Spleen (tissue), 13 donors: ENCODE measurements at regions of chr4 and their contacts with region 1.

Region 1: DNA sequence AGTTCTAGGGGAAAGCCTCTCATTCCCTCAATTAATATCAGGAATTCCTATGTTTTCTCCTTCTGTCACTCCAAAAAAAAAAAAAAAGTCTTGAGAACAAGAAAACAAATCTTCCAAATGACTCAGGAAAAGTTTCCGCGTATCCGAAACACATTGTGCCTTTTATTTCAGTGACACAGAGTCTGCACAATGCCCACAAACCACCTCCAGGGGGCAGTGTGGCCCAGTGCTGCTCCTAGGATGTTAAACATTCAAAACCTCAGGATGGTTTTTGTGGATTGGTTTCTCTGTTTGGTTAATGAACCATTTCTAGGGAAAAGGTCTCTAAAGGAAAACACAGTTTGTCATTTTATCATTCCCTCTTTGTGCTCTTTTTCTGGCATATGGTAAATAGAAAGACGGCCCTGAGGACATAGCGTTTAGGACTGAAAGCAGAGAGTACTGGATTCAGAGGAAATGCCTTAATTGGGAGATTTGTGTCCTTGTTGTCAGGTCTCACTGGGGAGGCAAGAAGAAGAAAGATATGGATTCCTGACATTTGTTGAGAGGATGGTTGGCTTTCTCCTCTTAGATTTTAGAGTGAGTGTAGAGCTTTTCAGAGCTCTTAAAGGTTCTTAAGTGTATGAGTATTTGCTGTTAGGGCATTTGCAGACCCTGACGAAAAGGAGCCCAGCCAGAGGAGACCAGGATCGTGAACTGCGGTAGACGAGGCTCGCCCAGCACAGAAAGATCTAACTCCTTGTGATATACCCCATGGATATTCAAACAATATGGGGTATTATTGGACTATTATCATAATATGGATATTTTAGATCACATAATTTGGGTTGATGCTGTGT is 65.7 kb upstream of the MAP9 start:
- DNase-seq: peak; percentile 82
- H3K4me3 ChIP-seq: no peak overlapping the region
- H3K27ac ChIP-seq: peak overlapping the region in 2 of 8 donors; percentile 2 to 17
- H3K4me1 ChIP-seq: peaks cover 0 to 12% (median 2%) of the 10 kb centered on the region in 6 donors
- H3K27me3 ChIP-seq: peaks cover 0 to 11% (median 3%) of the 10 kb centered on the region in 7 donors
- CTCF ChIP-seq: peak; percentile 64 to 90 (median 85)
- POLR2A ChIP-seq: no peak

Region 2: DNA sequence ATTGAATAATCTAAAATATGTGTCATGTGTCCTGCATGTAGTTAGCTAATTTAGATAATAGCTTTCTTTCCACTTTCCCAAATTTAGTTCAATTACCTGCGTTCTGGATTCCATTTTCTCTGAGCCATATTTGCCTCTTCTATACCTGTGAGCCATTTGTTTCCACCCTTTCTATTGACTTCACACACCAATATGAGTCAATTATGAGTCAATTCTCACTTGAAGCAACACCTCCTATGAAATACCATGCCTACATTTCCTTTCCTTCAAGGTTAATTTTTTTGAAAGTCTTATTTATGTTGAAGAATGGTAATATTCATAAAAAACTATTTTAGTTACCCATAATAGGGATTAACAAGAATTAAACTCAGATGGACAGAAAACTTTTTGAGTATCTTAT is 208.3 kb before region 1 on chr4:
- intact Hi-C with region 1: no loop called
- DNase-seq: no peak
- H3K4me3 ChIP-seq: no peak overlapping the region
- H3K27ac ChIP-seq: no peak overlapping the region
- H3K4me1 ChIP-seq: no peaks in the 10 kb centered on the region
- H3K27me3 ChIP-seq: no peaks in the 10 kb centered on the region
- CTCF ChIP-seq: no peak
- POLR2A ChIP-seq: no peak

Region 3: GRCh38 chr4:155604718-155605626 is 162.5 kb after region 1 on chr4:
- intact Hi-C with region 1: no loop called
- DNase-seq: no peak
- H3K4me3 ChIP-seq: no peak overlapping the region
- H3K27ac ChIP-seq: no peak overlapping the region
- H3K4me1 ChIP-seq: no peaks in the 10 kb centered on the region
- H3K27me3 ChIP-seq: no peaks in the 10 kb centered on the region
- CTCF ChIP-seq: no peak
- POLR2A ChIP-seq: no peak

Region 4: GRCh38 chr4:155794589-155795236 is 352.2 kb after region 1 on chr4:
- intact Hi-C with region 1: loop called (anchors 5 kb)
- DNase-seq: no peak
- H3K4me3 ChIP-seq: no peak overlapping the region
- H3K27ac ChIP-seq: no peak overlapping the region
- H3K4me1 ChIP-seq: no peaks in the 10 kb centered on the region
- H3K27me3 ChIP-seq: no peaks in the 10 kb centered on the region
- CTCF ChIP-seq: no peak
- POLR2A ChIP-seq: no peak